Ascending aorta (tissue), 2 donors: ENCODE measurements at regions of chr6 and their contacts with region 1.

Region 1: GRCh38 chr6:83884523-83884922 is 25.0 kb downstream of the CYB5R4 start:
- DNase-seq: no peak
- H3K4me3 ChIP-seq: no peak overlapping the region
- H3K27ac ChIP-seq: no peak overlapping the region
- H3K4me1 ChIP-seq: peaks cover 0 to 15% of the 10 kb centered on the region in 2 donors
- H3K27me3 ChIP-seq: no peaks in the 10 kb centered on the region
- CTCF ChIP-seq: peak; percentile 55 to 75 (median 74)

Region 2: DNA sequence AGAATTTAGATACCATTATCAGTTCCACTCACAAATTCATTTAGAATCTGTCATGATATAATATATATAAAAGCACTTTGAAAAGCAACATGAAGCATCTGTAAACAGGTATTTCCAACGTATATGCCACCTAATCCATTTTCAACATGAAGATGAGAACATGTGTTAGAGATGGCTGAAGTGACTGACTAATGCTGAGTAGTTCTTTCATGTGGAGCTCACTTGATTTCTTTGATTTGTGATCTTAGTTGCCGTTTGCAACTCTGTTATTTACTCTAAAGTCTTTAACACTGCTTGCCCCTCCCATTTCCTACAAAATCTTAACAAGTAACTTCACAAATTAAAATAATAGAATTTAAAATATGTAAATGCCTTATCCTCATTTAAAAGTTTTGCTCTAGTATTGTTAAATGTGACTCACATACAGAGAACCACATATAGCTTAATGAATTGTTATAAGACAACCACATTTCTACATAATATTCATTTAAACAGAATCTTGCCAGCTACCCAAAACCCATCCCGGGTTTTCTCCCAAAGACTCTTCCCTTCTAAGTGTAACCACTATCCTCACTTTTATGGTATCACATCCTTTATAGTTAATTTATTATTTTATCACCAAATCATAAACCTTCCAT is 532.0 kb before region 1 on chr6:
- intact Hi-C with region 1: no loop called
- DNase-seq: no peak
- H3K4me3 ChIP-seq: no peak overlapping the region
- H3K27ac ChIP-seq: no peak overlapping the region
- H3K4me1 ChIP-seq: no peaks in the 10 kb centered on the region
- H3K27me3 ChIP-seq: no peaks in the 10 kb centered on the region
- CTCF ChIP-seq: no peak

Region 3: GRCh38 chr6:83808926-83809325 is 75.6 kb before region 1 on chr6:
- intact Hi-C with region 1: no loop called
- DNase-seq: no peak
- H3K4me3 ChIP-seq: no peak overlapping the region
- H3K27ac ChIP-seq: no peak overlapping the region
- H3K4me1 ChIP-seq: no peaks in the 10 kb centered on the region
- H3K27me3 ChIP-seq: no peaks in the 10 kb centered on the region
- CTCF ChIP-seq: no peak

Region 4: DNA sequence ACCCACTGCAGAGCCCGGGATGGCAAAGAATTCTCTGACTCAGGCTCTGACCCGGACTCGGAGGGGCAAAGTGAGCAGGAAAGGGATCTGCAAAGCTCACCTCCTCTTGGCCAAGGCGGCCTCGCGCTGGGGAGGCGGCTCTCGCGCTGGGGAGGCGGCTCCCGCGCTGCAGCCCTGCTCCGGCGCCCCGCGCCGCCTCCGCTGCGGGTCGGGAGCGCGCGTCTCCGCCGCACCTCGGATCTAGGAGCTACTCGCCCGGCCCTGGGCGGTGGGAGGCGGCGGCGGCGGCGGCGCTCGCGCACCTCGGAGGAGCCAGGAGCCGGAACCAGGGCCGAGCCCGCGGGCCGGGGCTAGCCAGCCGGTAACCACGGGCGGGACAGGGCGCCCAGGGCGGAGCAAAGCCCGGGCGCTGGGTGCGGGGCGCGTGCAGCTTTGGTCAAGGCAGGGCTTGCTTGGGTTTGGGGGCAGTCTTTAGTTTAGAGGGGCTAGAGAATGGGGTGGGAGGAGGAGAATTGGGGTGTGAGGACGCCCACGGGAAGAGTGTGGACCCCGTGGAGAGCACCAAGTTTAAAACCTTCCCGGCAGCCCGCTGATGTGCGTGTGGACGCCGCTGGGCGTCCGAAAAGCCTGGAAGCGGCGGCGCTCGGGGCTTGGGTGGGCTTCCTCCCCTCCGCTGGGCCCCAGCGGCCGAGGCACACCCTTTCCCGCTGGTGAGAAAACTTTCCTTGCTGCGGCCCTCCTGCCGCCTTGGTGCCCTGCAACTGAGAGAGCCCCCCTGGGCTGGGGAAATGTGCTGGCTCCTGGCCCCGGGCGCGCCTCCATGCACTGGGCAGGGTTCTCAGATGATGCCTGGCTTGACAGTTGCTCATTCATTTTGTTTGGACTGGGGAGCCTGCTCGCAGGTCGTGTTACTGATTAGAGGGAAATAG is 149.3 kb after region 1 on chr6 and contains the start of gene MRAP2:
- intact Hi-C with region 1: no loop called
- DNase-seq: peak in 1 of 2 donors; percentile 74
- H3K4me3 ChIP-seq: peak within 1 kb of the TSS; percentile 52 to 88
- H3K27ac ChIP-seq: peak within 1 kb of the TSS; percentile 87 to 96
- H3K4me1 ChIP-seq: peaks cover 0 to 49% of the 10 kb centered on the region in 2 donors
- H3K27me3 ChIP-seq: no peaks in the 10 kb centered on the region
- CTCF ChIP-seq: no peak
- total RNA-seq, gene MRAP2: 47.3 TPM

Region 5: DNA sequence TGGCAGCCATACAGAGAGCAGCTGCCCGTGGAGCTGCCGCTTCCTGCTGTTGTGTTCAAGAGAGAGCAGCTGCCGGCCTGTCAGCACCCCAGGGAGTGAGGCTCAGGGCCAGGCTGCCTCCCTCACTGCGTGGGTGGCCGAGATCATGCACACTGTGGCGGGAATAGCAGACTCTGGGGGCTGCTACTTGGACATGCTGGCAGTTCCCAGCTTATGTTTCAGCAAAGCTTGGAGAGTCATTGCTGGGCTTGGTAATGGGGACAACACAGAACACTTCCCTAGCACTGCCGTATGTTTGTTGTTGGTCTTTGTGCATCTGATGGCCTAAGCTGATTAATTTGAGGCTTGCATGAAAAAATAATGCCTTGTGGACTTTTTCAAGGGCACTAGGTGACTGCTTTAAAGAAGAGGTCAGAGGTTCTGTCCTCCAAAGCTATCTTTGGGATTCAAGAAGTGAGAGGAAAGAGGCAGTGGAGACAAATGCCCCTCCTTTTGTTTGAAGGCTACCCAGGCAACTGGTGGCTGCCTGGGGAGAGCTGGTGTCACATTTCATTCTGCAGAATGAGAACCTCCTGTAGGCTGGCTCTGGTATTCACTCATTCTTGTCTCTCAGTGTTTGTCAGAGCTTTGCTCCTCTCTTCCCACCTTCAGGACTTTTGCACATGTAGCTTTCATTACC is 167.8 kb after region 1 on chr6:
- intact Hi-C with region 1: loop called (anchors 10 kb)
- DNase-seq: peak; percentile 40 to 85
- H3K4me3 ChIP-seq: peak overlapping the region in 1 of 2 donors; percentile 32
- H3K27ac ChIP-seq: peak overlapping the region; percentile 76 to 79
- H3K4me1 ChIP-seq: peaks cover 3 to 32% of the 10 kb centered on the region in 2 donors
- H3K27me3 ChIP-seq: no peaks in the 10 kb centered on the region
- CTCF ChIP-seq: no peak

Region 6: GRCh38 chr6:84193114-84193708 is 308.7 kb after region 1 on chr6:
- intact Hi-C with region 1: loop called (anchors 2 kb)
- DNase-seq: no peak
- H3K4me3 ChIP-seq: no peak overlapping the region
- H3K27ac ChIP-seq: peak overlapping the region; percentile 66 to 69
- H3K4me1 ChIP-seq: peaks cover 0 to 6% of the 10 kb centered on the region in 2 donors
- H3K27me3 ChIP-seq: no peaks in the 10 kb centered on the region
- CTCF ChIP-seq: no peak

Region 7: DNA sequence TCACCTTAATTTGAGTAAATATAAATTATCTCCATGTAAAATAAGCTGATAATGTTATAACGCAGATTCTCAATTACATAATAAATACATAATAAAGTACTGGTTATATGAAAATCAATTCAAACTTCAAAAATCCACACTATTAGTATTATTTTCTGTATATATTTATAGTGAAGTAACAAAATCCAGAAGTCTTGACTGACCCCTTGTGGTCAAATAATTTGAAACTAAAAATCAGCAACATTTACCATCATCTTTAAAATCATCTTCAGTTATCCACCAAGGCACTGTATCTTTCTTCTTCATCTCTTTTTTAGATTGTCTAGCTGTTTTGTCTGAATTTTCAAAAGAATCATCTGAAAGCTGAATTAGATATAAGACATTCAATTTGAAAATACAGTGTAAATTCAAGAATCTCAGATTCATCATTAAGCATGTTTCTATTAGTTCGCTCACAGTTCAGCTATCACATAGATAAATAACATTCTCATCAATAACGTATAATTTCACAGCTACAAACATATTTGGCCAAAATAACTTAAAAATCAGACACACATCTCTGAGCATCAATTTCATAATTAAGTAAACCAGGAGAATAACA is 336.4 kb after region 1 on chr6:
- intact Hi-C with region 1: loop called (anchors 1 kb)
- DNase-seq: no peak
- H3K4me3 ChIP-seq: no peak overlapping the region
- H3K27ac ChIP-seq: no peak overlapping the region
- H3K4me1 ChIP-seq: no peaks in the 10 kb centered on the region
- H3K27me3 ChIP-seq: no peaks in the 10 kb centered on the region
- CTCF ChIP-seq: peak; percentile 19 to 65 (median 51)

Region 8: DNA sequence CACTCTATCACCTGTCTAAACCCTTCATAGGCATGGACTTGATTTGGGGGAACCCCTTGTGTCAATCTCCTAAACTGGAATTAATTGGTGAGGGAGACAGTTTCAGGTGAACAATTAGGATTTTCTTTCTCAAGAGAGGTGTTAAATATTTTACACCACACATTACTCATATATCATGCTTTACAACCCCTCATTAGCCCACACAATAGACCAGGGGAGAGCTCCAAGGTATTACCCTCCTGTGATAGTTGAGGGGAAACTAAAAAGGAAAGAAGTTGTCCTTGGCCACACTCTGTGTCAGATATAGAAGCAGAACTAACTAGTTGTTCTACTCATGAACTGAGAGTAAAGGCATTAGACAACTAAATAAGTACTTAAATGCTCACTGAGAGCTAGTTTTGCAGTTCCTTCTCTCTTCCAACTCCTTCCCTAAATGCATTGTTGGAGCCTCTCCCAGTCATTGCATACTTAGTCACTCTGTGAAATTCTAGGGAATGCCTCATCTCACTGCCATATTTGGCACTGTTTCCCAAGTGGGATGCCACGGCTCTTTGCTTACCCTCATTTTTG is 526.6 kb after region 1 on chr6:
- intact Hi-C with region 1: loop called (anchors 10 kb)
- DNase-seq: peak in 1 of 2 donors; percentile 65
- H3K4me3 ChIP-seq: no peak overlapping the region
- H3K27ac ChIP-seq: peak overlapping the region; percentile 55 to 59
- H3K4me1 ChIP-seq: peaks cover 0 to 13% of the 10 kb centered on the region in 2 donors
- H3K27me3 ChIP-seq: no peaks in the 10 kb centered on the region
- CTCF ChIP-seq: no peak